ENCODE measurements at regions of chr14 and their contacts with region 1.

Region 1: GRCh38 chr14:101767618-101768362 is 6.3 kb downstream of the PPP2R5C start:
- DNase-seq: no peak
- H3K4me3 ChIP-seq: no peak overlapping the region
- H3K27ac ChIP-seq: no peak overlapping the region
- H3K4me1 ChIP-seq: peaks cover 0 to 3% (median 0%) of the 10 kb centered on the region in 4 experiments; a peak in 1 of 7 replicates
- H3K27me3 ChIP-seq: peaks cover 0 to 3% (median 0%) of the 10 kb centered on the region in 4 experiments; a peak in 2 of 7 replicates
- CTCF ChIP-seq: no peak
- EP300 ChIP-seq: no peak
- POLR2A ChIP-seq: no peak
- RAD21 ChIP-seq: no peak

Region 2: GRCh38 chr14:101707068-101707842 is 60.5 kb before region 1 on chr14:
- CTCF ChIA-PET with region 1: interaction called, 18 read pairs
- POLR2A ChIA-PET with region 1: no interaction called
- DNase-seq: peak in 1 of 2 experiments; percentile 59
- H3K4me3 ChIP-seq: no peak overlapping the region
- H3K27ac ChIP-seq: no peak overlapping the region
- H3K4me1 ChIP-seq: peaks cover 0 to 23% (median 10%) of the 10 kb centered on the region in 4 experiments; a peak in 6 of 7 replicates
- H3K27me3 ChIP-seq: peaks cover 4 to 32% (median 20%) of the 10 kb centered on the region in 4 experiments
- CTCF ChIP-seq: peak; percentile 9 to 83 (median 78)
- EP300 ChIP-seq: no peak
- POLR2A ChIP-seq: no peak
- RAD21 ChIP-seq: peak; percentile 95 to 96

Region 3: DNA sequence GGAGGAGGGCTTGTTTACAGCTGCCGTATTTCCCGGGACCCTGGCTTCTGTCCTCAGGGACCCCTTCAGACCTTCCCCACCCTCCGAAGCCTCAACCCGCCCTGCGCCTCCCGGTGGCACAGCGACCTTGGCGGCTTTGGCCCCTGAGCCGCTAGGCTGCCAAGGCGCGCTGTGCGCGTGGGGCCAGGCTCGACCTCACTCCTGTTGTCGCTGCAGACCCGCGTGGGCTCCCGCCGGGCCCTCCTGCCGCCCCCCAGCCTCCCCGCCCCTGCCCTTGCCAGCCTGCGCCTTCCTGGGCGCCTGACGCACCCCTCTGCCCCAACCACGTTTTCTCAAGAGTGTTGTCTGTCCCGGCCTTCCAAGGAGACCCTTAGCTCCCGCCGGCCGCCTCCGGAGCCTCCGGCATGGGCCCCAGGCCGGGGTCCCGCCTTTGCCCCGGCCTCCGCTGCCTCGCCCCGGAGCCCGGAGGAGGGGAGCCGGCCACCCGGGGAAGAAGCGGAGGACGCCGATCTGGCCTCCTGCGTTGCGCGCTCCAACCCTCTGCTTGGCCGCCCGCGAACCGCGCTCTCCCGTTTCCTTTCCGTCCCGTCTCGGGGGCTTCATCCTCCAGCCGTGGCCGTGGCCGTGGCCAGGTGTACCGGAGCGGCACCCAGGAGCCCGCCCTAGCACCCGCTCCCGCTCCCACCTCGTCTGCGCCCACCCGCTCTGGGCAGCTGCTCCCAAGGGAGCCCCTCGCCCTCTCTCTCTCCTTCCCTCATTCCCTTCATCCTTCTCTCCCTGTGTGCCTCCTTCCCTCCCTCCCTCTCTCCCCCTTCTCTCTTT is 13.7 kb after region 1 on chr14:
- CTCF ChIA-PET with region 1: interaction called, 18 read pairs
- POLR2A ChIA-PET with region 1: interaction called, 3 read pairs
- DNase-seq: peak in 1 of 2 experiments; percentile 58
- H3K4me3 ChIP-seq: peak overlapping the region; percentile 65 to 84 (median 78)
- H3K27ac ChIP-seq: no peak overlapping the region
- H3K4me1 ChIP-seq: peaks cover 3 to 7% (median 6%) of the 10 kb centered on the region in 4 experiments; a peak in 6 of 7 replicates
- H3K27me3 ChIP-seq: peaks cover 4 to 32% (median 29%) of the 10 kb centered on the region in 4 experiments
- CTCF ChIP-seq: no peak
- EP300 ChIP-seq: no peak
- POLR2A ChIP-seq: no peak
- RAD21 ChIP-seq: no peak

Region 4: DNA sequence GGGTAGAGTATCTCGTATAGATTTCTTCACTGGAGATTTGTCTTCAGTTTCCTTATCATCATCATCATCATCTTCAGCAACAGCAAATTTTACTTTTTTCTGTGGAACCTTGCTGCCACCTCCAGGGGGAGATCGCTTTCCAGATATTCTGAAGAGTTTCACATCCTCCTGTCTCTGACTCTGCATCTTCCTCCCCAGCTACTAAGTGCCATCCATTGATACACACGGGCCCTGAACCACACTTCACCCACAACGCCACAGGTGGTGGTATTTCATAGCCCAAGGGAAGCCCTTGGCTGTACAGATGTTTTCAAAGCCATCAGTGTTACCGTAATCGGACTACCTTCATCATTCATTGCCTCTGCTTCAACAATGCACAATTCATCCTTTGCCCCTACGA is 75.9 kb after region 1 on chr14:
- CTCF ChIA-PET with region 1: interaction called, 24 read pairs
- POLR2A ChIA-PET with region 1: no interaction called
- DNase-seq: no peak
- H3K4me3 ChIP-seq: no peak overlapping the region
- H3K27ac ChIP-seq: no peak overlapping the region
- H3K4me1 ChIP-seq: peaks cover 0 to 7% (median 4%) of the 10 kb centered on the region in 4 experiments; a peak in 5 of 7 replicates
- H3K27me3 ChIP-seq: no peaks in the 10 kb centered on the region
- CTCF ChIP-seq: peak in 2 of 3 experiments; percentile 40 to 45; a peak in 2 of 4 replicates
- EP300 ChIP-seq: no peak
- POLR2A ChIP-seq: no peak
- RAD21 ChIP-seq: peak; percentile 50 to 60

Region 5: GRCh38 chr14:101873991-101874390 is 106.2 kb after region 1 on chr14:
- CTCF ChIA-PET with region 1: interaction called, 10 read pairs
- POLR2A ChIA-PET with region 1: no interaction called
- DNase-seq: no peak
- H3K4me3 ChIP-seq: no peak overlapping the region
- H3K27ac ChIP-seq: no peak overlapping the region
- H3K4me1 ChIP-seq: no peaks in the 10 kb centered on the region
- H3K27me3 ChIP-seq: no peaks in the 10 kb centered on the region
- CTCF ChIP-seq: no peak
- EP300 ChIP-seq: no peak
- POLR2A ChIP-seq: no peak
- RAD21 ChIP-seq: no peak

Region 6: DNA sequence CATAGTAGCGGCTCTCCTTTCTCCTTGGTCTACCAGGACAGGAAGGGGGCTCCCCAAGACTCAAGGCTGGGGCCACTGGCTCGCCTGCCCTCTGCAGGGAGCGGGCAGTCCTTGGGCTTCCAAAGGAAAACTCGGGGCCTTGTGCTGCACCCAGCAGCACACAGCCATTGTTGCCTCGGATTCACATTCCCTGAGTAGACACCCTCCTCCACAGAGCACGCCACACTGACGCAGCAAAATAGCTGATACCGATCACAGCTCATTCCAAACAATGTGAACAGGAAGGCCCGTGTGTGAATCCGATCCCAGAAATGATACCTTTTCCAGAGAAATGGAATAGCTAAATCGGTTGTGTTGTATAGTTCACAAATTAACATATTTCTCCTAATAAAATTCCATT is 131.5 kb after region 1 on chr14:
- CTCF ChIA-PET with region 1: interaction called, 20 read pairs
- POLR2A ChIA-PET with region 1: no interaction called
- DNase-seq: no peak
- H3K4me3 ChIP-seq: no peak overlapping the region
- H3K27ac ChIP-seq: no peak overlapping the region
- H3K4me1 ChIP-seq: no peaks in the 10 kb centered on the region
- H3K27me3 ChIP-seq: no peaks in the 10 kb centered on the region
- CTCF ChIP-seq: no peak
- EP300 ChIP-seq: no peak
- POLR2A ChIP-seq: no peak
- RAD21 ChIP-seq: no peak

Region 7: DNA sequence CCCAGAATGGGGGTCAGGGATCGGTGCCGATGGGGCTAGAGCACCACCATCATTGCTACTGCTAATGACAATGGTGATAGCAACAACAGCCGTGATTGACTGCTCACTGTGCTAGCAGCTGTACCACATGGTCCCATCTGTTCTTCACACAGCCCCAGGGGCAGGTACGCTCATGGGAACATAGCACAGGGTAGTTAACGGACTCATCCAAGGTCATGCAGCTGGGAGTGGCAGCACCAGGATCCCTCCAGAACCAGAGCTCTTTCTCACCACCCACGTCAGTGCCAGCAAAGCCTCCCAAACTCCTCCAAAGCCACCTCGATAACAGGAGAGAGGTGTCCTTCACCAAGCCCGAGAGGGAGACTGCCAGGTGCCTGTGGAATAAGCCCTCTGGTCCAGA is 185.4 kb after region 1 on chr14:
- CTCF ChIA-PET with region 1: interaction called, 33 read pairs
- POLR2A ChIA-PET with region 1: interaction called, 6 read pairs
- DNase-seq: no peak
- H3K4me3 ChIP-seq: no peak overlapping the region
- H3K27ac ChIP-seq: no peak overlapping the region
- H3K4me1 ChIP-seq: peaks cover 0 to 6% (median 3%) of the 10 kb centered on the region in 4 experiments; a peak in 5 of 7 replicates
- H3K27me3 ChIP-seq: peaks cover 0 to 2% (median 0%) of the 10 kb centered on the region in 4 experiments; a peak in 2 of 7 replicates
- CTCF ChIP-seq: no peak
- EP300 ChIP-seq: no peak
- POLR2A ChIP-seq: no peak
- RAD21 ChIP-seq: no peak